ENCODE measurements at regions of chr4 and their contacts with region 1.

Region 1: DNA sequence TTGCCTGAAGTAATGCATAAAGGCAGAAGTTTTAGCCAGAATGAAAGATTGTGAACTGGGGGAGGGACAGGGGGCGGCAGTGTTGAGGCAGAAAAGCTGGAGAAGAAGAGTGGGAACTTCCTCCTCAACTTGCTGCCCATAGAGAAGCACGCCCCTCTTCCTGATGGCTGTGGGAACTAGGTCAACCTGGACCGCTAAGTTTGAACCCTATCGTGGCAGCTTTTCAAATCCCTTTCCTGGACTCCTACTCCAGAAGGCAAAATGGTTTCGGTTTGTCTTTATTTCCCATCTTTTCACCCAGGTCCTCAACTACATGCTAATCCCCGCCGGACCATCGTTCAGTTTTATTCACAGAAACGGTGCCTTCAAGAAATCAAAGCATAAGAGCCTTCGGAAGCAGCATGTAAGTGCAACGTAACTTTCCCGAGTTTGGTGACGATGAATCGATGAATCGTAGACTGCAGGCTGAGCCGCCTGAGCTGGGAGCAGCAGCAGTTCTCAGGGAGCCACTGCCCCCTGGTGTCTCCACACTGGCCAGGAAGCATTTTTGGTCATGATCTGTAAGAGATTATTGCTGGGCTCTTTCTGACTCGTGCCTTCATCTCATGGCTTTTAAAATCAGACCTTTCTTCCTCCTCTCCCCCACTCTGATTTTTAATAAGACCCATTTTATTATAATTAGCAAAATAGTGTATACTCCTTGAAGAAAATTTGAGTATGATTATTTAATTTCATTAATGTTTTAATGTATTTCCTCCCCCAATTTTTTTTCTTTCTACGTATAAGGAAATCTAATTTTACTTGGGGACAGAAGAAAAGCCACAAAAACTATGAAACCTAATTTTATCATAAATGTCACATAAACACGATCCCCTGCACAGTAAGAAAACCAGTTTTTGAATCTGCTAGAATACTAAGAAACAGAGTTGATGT is 21.4 kb downstream of the SPINK2 start:
- DNase-seq: peak; percentile 25
- H3K4me3 ChIP-seq: peak overlapping the region; percentile 54
- H3K27me3 ChIP-seq: peaks cover 2% of the 10 kb centered on the region; the same call in 1 of the 2 replicates
- CTCF ChIP-seq: peak; percentile 97

Region 2: DNA sequence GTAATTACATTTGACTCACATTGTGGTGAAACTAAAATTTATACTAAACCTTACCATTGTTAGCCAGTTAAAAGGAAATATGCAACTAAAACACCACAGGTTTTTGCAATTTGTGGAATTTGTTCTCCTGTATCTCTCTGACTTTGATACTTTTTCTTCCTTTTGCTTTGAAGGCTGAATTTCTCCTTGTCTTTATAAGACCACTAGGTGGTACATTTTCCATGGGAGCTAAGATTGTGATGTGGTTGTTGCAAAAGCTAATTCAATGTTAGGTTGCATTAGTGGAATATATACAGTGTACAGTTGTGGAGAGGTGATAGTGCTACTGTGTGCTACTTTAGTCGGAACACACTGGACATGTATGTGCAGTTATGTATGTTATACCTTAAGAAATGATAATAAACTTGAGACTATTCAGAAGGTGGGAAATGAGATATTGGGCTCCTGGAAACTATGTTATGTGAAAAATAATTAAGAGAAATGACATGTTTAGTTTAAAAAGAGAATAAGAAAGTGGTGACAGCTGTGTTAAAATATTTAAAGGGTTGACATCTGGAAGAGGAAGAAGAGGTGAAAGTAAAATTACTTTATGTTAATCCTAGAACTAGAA is 224.2 kb before region 1 on chr4:
- CTCF ChIA-PET with region 1: interaction called, 65 read pairs
- POLR2A ChIA-PET with region 1: no interaction called
- DNase-seq: peak; percentile 3
- H3K4me3 ChIP-seq: no peak overlapping the region
- H3K27me3 ChIP-seq: peaks cover 2% of the 10 kb centered on the region; the same call in 1 of the 2 replicates
- CTCF ChIP-seq: peak; percentile 60

Region 3: GRCh38 chr4:56690393-56690792 is 109.7 kb before region 1 on chr4:
- CTCF ChIA-PET with region 1: no interaction called
- POLR2A ChIA-PET with region 1: no interaction called
- DNase-seq: no peak
- H3K4me3 ChIP-seq: no peak overlapping the region
- H3K27me3 ChIP-seq: peaks cover 3% of the 10 kb centered on the region
- CTCF ChIP-seq: no peak

Region 4: DNA sequence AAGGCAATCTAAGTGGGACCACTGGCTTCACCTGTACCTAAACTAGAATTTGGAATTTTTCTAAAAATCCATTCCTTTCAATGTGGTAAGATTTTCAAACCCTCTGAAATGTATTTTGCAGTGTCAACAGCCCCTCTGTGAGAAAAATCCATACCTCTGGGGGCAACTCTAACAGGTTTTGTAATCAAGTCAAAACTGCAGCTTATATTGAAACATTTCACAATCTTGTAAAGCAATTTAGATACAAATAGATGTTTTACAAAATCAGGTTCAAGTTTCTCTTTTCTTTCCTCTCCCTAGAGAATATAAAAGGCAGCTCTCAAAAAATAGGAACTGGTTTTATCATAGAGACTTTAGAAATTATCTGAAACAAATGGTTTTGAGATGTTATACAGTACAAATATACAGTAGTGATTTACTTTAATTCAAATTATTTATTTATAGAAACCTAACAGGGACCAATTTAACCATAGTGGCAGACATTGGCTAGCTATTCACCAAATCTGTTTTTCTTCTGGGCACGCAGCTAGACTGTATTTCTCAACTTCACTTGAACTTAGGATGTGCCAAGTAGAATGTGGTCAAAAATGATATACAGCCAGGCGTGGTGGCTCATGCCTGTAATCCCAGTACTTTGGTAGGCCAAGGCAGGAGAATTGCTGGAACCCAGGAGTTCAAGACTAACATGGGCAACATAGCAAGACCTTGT is 57.7 kb after region 1 on chr4:
- CTCF ChIA-PET with region 1: no interaction called
- POLR2A ChIA-PET with region 1: no interaction called
- DNase-seq: no peak
- H3K4me3 ChIP-seq: no peak overlapping the region
- H3K27me3 ChIP-seq: no peaks in the 10 kb centered on the region
- CTCF ChIP-seq: no peak

Region 5: GRCh38 chr4:56961107-56961500 is 161.0 kb after region 1 on chr4:
- CTCF ChIA-PET with region 1: no interaction called
- POLR2A ChIA-PET with region 1: no interaction called
- DNase-seq: no peak
- H3K4me3 ChIP-seq: no peak overlapping the region
- H3K27me3 ChIP-seq: no peaks in the 10 kb centered on the region
- CTCF ChIP-seq: no peak